ENCODE measurements at regions of chr5 and their contacts with region 1.

Region 1: DNA sequence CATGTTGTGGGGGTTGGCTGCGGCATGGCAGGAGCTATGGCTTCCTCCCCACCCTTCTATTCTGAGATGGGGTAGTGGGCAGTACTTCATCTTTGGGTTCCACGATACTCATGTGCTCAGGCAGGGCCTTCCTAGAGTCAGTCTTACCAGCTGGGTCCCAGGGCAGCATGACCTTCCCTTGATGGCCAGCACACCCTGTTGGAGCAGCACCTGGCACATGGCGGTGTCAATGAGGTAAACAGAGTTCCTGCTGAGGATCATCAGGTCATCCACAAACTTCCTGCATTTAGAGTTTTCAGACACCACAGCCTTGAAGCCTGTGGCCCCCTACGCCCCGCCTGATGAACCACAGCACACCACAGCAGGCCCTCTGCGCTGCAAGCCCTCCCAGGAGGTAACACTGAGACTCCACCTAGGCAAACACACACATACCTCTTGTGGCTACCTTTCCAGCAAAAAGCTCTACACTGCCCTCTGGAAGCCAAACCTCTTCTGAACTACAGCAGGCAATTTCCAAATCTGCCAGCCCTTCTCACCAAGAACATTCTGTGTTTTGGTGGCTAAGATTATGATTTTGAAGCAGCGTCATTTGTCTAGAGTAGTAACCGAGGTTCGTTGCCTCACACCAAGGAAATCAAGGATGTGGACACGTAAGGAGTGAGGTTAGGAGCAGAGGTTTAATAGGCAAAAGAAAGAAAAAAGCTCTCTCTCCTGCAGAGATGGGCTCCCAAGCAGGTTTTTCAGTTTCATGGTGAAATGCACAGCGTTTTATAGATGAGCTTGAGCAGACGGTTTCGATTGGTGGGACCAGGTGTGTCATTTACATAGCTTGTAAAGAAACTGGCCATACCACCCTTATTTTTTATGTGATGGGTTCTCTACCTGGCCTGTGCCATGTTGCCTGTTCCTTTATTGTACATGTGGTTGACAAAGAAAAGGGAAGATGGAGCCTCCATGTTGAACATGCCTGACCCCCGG is 20.3 kb upstream of the TMEM174 start:
- DNase-seq: no peak
- H3K4me3 ChIP-seq: no peak overlapping the region
- CTCF ChIP-seq: no peak

Region 2: DNA sequence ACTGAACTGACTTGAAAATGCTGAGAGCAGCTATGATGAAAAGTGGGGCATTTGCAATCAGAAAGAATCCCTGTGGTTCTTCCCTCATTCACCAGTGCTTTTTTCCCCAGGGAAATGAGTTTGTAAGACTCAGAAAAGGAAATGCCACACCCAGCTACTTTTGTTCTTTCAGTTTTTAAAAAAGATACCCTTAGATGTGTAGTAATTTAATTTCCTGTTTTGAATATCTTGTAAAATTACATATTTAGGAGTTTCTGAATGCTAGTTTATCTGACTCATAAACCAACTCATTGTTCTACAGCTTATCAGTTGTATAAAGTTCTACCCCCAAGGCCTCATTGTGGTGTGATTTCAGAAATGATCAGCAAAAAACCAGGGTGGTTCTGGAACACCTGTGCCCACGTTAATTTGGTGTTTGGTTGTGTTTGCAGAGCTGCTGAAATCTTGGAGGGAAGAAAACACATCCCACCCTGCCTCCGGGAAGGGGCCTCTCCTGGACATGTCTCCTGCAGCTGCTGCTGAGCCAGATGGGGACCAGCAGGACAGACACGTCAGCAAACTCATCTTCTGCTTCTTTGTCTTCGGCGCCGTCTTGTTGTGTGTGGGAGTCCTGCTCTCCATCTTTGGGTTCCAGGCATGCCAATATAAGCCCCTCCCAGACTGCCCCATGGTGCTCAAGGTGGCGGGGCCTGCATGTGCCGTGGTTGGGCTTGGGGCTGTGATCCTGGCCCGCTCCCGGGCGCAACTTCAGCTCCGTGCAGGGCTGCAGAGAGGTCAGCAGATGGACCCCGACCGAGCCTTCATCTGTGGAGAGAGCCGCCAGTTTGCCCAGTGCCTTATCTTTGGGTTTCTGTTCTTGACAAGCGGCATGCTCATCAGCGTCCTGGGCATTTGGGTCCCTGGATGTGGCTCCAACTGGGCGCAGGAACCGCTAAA is 29.6 kb before region 1 on chr5:
- CTCF ChIA-PET with region 1: no interaction called
- POLR2A ChIA-PET with region 1: no interaction called
- DNase-seq: peak; percentile 44
- H3K4me3 ChIP-seq: no peak overlapping the region
- CTCF ChIP-seq: no peak

Region 3: DNA sequence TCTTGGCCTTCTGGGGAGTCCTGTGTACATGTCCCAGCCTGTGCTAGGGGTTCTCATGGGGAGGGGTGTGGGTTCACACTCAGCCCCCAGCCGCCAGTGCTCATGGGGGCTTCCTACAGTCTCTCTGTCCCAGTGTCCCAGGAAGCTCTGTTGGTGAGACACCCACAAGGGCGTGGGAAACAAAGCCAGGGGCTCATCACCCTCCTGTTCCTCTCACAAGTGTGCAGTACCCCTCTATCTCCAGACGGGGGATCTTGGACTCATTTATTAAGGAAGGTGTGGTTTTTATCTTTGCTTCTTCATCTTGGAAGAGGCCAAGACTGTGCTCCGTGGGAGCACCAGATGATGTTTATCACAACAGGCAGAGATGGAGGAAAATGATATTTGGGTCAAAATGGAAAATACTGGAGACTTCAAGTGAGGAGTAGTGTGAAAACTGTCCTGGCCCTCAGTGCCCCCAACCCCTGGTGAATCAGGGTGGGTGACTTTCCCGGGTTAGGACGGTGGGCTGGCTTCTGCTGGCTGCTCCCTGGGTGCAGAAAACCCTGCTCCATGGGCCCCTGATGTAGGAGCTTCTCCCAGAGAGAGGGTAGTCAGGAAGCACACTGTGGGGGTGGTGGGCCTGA is 17.2 kb before region 1 on chr5:
- CTCF ChIA-PET with region 1: interaction called, 17 read pairs
- POLR2A ChIA-PET with region 1: no interaction called
- DNase-seq: no peak
- H3K4me3 ChIP-seq: no peak overlapping the region
- CTCF ChIP-seq: peak; percentile 54

Region 4: GRCh38 chr5:73170522-73170921 is 17.8 kb after region 1 on chr5:
- CTCF ChIA-PET with region 1: interaction called, 11 read pairs
- POLR2A ChIA-PET with region 1: interaction called, 3 read pairs
- DNase-seq: no peak
- H3K4me3 ChIP-seq: no peak overlapping the region
- CTCF ChIP-seq: peak; percentile 32

Measured in AG04449 (cell line).